H1 (cell line): ENCODE measurements at regions of chr7 and their contacts with region 1.

Region 1: GRCh38 chr7:5780801-5781496 is 514 bp downstream of the RNF216 start:
- DNase-seq: peak in 1 of 2 experiments; percentile 65
- H3K4me3 ChIP-seq: peak overlapping the region; percentile 53 to 85 (median 60)
- H3K27ac ChIP-seq: no peak overlapping the region
- H3K4me1 ChIP-seq: no peaks in the 10 kb centered on the region
- H3K27me3 ChIP-seq: no peaks in the 10 kb centered on the region
- CTCF ChIP-seq: no peak
- EP300 ChIP-seq: no peak
- POLR2A ChIP-seq: no peak
- RAD21 ChIP-seq: no peak

Region 2: DNA sequence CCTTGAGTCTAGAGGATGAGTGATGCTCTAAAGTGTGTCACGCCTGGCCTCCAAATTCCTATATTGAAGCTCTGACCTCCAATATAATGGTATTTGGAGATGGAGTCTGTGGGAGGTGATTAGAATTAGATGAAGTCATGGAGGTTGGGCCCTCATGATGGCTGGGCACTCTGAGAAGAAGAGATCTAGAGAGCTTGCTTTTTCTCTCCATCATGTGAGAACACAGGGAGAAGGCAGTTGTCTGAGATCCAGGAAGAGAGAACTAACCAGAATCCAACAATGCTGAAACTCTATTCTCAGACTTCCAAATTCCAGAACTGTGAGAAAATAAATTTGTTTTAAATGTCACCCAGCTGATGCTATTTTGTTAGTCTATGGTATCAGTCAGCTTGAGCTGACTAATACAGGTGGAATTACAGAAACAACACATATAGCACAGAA is 14.6 kb before region 1 on chr7:
- CTCF ChIA-PET with region 1: interaction called, 18 read pairs
- POLR2A ChIA-PET with region 1: interaction called, 4 read pairs
- DNase-seq: no peak
- H3K4me3 ChIP-seq: no peak overlapping the region
- H3K27ac ChIP-seq: no peak overlapping the region
- H3K4me1 ChIP-seq: no peaks in the 10 kb centered on the region; a peak in 1 of 7 replicates
- H3K27me3 ChIP-seq: no peaks in the 10 kb centered on the region
- CTCF ChIP-seq: no peak
- EP300 ChIP-seq: no peak
- POLR2A ChIP-seq: no peak
- RAD21 ChIP-seq: no peak

Region 3: DNA sequence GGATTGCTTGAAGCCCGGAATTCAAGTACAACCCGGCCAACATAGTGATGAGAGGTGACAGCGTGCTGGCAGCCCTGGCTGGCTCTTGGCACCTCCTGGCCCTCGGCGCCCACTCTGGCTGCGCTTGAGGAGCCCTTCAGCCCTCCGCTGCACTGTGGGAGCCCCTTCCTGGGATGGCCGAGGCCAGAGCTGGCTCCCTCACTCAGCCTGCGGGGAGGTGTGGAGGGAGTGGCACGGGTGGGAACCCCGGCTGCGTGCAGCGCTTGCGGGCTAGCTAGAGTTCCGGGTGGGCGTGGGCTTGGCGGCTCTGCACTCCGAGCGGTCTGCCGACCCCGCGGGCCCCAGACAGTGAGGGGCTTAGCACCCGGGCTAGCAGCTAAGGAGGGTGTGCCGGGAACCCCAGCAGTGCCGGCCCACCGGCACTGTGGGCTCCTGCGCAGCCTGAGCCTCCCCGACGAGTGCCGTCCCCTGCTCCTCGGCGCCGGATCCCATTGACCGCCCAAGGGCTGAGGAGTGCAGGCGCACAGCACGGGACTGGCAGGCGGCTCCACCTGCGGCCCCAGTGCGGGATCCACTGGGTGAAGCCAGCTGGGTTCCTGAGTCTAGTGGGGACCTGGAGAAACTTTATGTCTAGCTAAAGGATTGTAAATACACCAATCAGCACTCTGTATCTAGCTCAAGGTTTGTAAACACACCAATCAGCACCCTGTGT is 12.6 kb after region 1 on chr7:
- CTCF ChIA-PET with region 1: interaction called, 13 read pairs
- POLR2A ChIA-PET with region 1: no interaction called
- DNase-seq: no peak
- H3K4me3 ChIP-seq: no peak overlapping the region
- H3K27ac ChIP-seq: no peak overlapping the region
- H3K4me1 ChIP-seq: peaks cover 0 to 5% (median under 1%) of the 10 kb centered on the region in 4 experiments; a peak in 2 of 7 replicates
- H3K27me3 ChIP-seq: no peaks in the 10 kb centered on the region
- CTCF ChIP-seq: no peak
- EP300 ChIP-seq: no peak
- POLR2A ChIP-seq: no peak
- RAD21 ChIP-seq: no peak